OCI-LY7 (cell line): ENCODE measurements at regions of chr5 and their contacts with region 1.

Region 1: DNA sequence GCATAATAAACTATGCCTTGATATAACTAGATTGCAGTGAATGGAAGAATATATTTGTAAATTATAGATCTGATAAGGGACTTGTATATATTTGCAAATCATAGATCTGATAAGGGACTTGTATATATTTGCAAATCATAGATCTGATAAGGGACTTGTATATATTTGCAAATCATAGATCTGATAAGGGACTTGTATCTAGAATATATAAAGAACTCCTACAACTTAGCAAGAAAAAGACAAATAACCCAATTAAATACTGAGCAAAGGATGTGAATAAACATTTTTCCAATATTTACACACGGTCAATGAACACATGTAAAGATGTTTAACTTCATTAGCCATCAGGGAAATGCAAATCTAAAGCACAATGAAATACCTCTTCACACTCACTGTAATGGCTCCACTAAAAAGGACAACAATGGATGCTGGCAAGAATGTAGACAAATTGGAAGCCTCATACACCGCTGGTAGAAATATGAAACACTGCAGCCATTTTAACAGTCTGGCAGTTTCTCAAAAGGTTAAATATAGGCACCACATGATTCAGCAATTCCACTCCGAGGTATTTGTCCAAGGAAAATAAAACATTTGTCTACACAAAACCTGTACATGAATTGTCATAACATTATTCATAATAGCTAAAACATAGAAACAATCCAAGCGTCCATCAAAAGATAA is 20.2 kb downstream of the RNF145 start:
- DNase-seq: no peak
- H3K4me3 ChIP-seq: no peak overlapping the region
- H3K27ac ChIP-seq: no peak overlapping the region
- H3K4me1 ChIP-seq: no peaks in the 10 kb centered on the region
- CTCF ChIP-seq: no peak

Region 2: DNA sequence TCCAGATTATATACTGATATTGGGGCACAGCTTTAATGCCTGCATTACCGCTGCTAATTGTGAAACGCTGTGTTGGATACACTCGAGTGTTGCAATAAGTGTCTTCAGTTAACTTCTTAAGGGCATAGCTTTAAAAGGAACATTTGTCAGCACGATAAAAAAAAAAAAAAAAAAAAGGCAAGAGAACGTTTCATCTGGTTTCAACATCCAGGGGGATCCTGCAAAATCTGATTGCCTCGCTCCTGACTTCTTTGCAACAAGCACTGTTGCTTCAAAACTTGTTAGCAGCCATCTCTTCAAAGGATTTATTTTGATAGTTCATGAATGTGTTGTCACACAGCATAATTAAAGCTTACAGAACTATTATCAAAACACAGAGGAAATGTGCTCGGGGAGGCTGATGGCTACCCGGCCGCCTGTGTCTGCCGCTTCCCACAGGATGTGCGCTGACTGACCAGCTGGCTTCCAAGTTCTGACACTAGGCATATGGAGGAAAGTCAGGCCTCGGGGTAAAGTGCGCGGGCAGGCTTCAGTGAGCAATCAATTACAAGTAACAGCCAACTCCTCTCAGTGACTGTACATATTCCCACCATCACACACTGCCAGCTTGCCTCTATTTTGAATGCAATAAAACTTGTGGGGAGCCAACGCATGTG is 167.1 kb before region 1 on chr5:
- CTCF ChIA-PET with region 1: no interaction called
- POLR2A ChIA-PET with region 1: no interaction called
- intact Hi-C with region 1: no loop called
- DNase-seq: no peak
- H3K4me3 ChIP-seq: no peak overlapping the region
- H3K27ac ChIP-seq: no peak overlapping the region
- H3K4me1 ChIP-seq: peaks cover 10% of the 10 kb centered on the region
- CTCF ChIP-seq: no peak

Region 3: GRCh38 chr5:159178978-159179377 is 10.2 kb before region 1 on chr5:
- CTCF ChIA-PET with region 1: no interaction called
- POLR2A ChIA-PET with region 1: interaction called, 20 read pairs
- intact Hi-C with region 1: no loop called
- DNase-seq: no peak
- H3K4me3 ChIP-seq: no peak overlapping the region
- H3K27ac ChIP-seq: no peak overlapping the region
- H3K4me1 ChIP-seq: no peaks in the 10 kb centered on the region
- CTCF ChIP-seq: no peak

Region 4: GRCh38 chr5:160379511-160379910 is 1190.3 kb after region 1 on chr5:
- CTCF ChIA-PET with region 1: no interaction called
- POLR2A ChIA-PET with region 1: no interaction called
- intact Hi-C with region 1: no loop called
- DNase-seq: no peak
- H3K4me3 ChIP-seq: no peak overlapping the region
- H3K27ac ChIP-seq: no peak overlapping the region
- H3K4me1 ChIP-seq: peaks cover 3% of the 10 kb centered on the region
- CTCF ChIP-seq: no peak